ENCODE measurements at regions of chr14 and their contacts with region 1.

Region 1: GRCh38 chr14:37197421-37198272 is at the start of gene MIPOL1:
- DNase-seq: peak; percentile 85
- H3K4me3 Mint-ChIP-seq: peak within 1 kb of the TSS; percentile 95
- H3K27ac Mint-ChIP-seq: peak within 1 kb of the TSS; percentile 99
- H3K4me1 Mint-ChIP-seq: peaks cover 10% of the 10 kb centered on the region
- H3K27me3 Mint-ChIP-seq: no peaks in the 10 kb centered on the region
- CTCF ChIP-seq: no peak
- total RNA-seq, gene MIPOL1: 16.0 and 16.3 TPM in 2 replicates

Region 2: DNA sequence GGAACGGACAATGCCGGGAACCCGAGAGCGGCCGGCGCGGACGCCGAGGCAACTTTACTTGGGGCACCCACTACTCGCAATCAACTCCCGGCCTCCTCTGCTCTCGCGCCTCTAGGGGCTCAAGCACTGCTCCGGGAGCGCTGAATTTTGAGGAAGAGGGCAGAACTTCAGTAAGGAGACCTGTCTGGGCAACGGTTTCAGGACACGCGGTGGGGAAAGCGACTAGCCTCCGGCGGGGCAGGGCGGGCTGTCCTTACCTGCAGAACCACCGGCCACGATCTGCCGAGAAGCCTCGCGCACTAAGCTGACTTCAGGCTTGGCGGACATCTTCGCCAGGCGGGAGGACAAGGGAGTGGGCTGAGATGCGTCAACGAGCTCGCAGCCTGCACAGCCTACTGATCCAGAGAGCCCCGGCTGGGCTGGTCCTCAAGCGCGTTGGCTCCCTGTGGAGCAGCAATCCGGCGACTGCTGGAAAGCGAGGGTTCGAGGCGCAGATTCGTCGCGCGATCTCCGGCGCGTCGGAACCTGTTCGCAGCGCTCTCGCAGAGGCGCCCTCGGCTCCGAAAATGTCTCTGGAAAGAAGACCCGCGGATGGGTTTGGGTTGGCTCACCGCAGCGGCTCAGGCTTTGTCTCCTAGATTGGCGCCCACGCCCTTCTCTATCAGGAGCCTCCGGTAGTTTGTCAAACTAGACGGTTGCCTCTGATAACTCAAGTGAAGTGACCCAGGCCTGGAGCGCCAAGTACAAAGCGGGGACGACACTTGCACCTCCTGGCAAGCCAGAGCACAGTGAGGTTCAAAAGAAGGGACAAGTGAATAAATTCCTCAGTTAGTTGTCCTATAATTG is 25.4 kb before region 1 on chr14 and contains the start of gene SLC25A21:
- CTCF ChIA-PET with region 1: interaction called, 3 read pairs
- POLR2A ChIA-PET with region 1: interaction called, 44 read pairs
- intact Hi-C with region 1: loop called (anchors 1 kb)
- DNase-seq: peak; percentile 85
- H3K4me3 Mint-ChIP-seq: peak within 1 kb of the TSS; percentile 90
- H3K27ac Mint-ChIP-seq: peak within 1 kb of the TSS; percentile 95
- H3K4me1 Mint-ChIP-seq: peaks cover 5% of the 10 kb centered on the region
- H3K27me3 Mint-ChIP-seq: no peaks in the 10 kb centered on the region
- CTCF ChIP-seq: peak; percentile 11
- total RNA-seq, gene SLC25A21: 1.1 and 1.4 TPM in 2 replicates

Region 3: GRCh38 chr14:37253905-37254304 is 56.3 kb after region 1 on chr14:
- CTCF ChIA-PET with region 1: no interaction called
- POLR2A ChIA-PET with region 1: no interaction called
- intact Hi-C with region 1: no loop called
- DNase-seq: peak; percentile 81
- H3K4me3 Mint-ChIP-seq: no peak overlapping the region
- H3K27ac Mint-ChIP-seq: no peak overlapping the region
- H3K4me1 Mint-ChIP-seq: peaks cover 4% of the 10 kb centered on the region
- H3K27me3 Mint-ChIP-seq: no peaks in the 10 kb centered on the region
- CTCF ChIP-seq: no peak